ENCODE measurements at regions of chr12 and their contacts with region 1.

Region 1: DNA sequence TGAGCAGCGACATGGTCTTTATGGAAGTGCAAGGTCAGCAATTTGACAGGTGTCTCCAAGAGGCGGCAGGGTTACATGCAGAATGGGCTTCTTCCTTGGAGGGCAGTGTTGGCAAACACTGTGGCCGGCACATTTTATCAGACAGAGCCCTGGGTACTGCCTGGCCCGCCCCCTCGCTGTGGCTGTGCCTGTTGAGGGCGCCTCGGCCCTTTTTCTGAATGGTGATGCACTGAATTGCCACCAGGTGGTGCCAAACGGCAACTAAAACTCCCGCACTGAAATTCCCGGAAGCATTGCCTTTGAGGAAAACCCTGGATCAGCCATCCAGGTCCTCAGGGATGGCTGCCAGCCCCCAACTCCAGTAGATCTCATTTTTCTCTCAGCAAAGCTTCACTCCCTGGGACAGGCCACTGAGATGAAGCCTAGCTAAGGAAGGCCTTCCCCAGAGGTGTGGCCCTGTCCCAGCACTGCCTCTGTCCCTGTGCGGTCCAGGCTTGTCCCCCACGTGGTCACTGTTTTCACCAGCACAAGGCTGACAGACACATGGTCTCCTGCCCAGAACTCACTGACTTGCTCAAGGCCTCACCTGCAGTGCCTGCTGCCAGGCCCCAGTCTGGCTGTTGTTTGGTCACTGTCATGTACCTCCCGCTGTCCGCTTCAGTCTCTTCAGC is 73.6 kb downstream of the TESC start:
- DNase-seq: peak; percentile 23
- H3K4me3 Mint-ChIP-seq: no peak overlapping the region
- H3K27ac Mint-ChIP-seq: no peak overlapping the region
- H3K4me1 Mint-ChIP-seq: peaks cover 6% of the 10 kb centered on the region
- H3K27me3 Mint-ChIP-seq: no peaks in the 10 kb centered on the region

Region 2: DNA sequence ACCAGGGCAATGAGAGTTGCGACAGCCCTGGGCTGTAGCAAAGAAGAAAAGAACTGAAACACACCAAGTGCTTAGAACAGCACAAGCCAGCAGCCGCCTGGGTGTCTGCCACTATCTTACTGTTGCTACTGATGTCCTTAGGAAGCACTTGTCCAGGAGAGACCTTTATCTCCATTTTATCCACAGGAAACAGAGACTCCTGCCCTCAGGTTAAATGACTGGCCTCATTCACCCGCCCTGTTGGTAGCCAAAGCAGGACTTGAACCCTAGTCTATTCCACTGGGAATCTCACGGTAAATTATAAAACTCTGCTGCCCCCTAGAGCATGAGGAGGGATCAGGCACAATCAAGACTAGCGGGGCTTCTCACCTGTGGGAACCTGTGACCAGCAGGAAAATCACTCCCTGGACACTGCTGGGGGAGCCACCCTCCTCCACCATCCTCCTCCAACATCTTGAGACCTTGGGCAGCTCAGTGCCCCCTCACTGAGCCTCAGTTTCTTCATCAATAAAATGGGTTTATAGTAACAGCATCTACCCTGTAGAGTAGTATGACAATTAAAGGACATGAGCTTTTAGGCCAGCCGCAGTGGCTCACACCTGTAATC is 94.1 kb after region 1 on chr12:
- intact Hi-C with region 1: loop called (anchors 1 kb)
- DNase-seq: peak; percentile 8
- H3K4me3 Mint-ChIP-seq: no peak overlapping the region
- H3K27ac Mint-ChIP-seq: no peak overlapping the region
- H3K4me1 Mint-ChIP-seq: peaks cover under 1% of the 10 kb centered on the region
- H3K27me3 Mint-ChIP-seq: peaks cover 1% of the 10 kb centered on the region

Measured in activated T-helper 1 cell treated with anti-CD3 and anti-CD28 coated beads, Interleukin-12 subunit alpha, Interleukin-12 subunit beta, Interleukin-2, Interleukin-4 antibody, amounts not matched to agents 30 ng/mL and 10 ng/mL and 1 ng/mL, durations not matched to agents 14 hours and 24 hours and 36 hours (primary cell).